ENCODE measurements at regions of chr11 and their contacts with region 1.

Region 1: DNA sequence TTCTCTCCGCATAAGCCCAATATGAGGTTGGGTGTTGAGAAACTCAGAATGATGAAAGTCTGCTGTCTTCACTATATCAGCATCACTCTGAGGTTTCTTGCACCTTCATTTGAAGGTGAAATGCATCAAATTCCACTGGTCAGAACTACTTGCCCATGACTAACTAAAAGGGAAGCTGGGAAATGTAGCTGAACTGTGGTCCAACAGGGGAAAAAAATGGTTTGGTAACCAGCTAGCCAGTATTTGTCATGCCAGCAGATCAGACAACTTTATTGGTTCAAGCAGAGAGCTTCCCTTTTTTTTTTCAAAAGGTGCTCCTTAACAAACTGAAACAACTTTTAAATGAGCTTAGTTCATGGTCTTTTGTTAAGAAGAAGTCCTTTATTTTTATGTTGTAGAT is 14.2 kb upstream of the PIK3C2A start:
- DNase-seq: peak in 2 of 3 donors; percentile 49 to 56
- H3K4me3 ChIP-seq: no peak overlapping the region
- H3K27ac ChIP-seq: peak overlapping the region in 1 of 2 experiments; percentile 8
- H3K4me1 ChIP-seq: peaks cover 0 to 8% (median 3%) of the 10 kb centered on the region in 4 experiments
- H3K27me3 ChIP-seq: no peaks in the 10 kb centered on the region

Region 2: GRCh38 chr11:17098038-17098437 is 123.9 kb before region 1 on chr11:
- CTCF ChIA-PET with region 1: no interaction called
- POLR2A ChIA-PET with region 1: no interaction called
- DNase-seq: no peak
- H3K4me3 ChIP-seq: no peak overlapping the region
- H3K27ac ChIP-seq: no peak overlapping the region
- H3K4me1 ChIP-seq: no peaks in the 10 kb centered on the region
- H3K27me3 ChIP-seq: no peaks in the 10 kb centered on the region

Region 3: GRCh38 chr11:17197431-17197898 is 24.5 kb before region 1 on chr11:
- CTCF ChIA-PET with region 1: no interaction called
- POLR2A ChIA-PET with region 1: no interaction called
- DNase-seq: no peak
- H3K4me3 ChIP-seq: no peak overlapping the region
- H3K27ac ChIP-seq: no peak overlapping the region
- H3K4me1 ChIP-seq: no peaks in the 10 kb centered on the region
- H3K27me3 ChIP-seq: no peaks in the 10 kb centered on the region

Region 4: DNA sequence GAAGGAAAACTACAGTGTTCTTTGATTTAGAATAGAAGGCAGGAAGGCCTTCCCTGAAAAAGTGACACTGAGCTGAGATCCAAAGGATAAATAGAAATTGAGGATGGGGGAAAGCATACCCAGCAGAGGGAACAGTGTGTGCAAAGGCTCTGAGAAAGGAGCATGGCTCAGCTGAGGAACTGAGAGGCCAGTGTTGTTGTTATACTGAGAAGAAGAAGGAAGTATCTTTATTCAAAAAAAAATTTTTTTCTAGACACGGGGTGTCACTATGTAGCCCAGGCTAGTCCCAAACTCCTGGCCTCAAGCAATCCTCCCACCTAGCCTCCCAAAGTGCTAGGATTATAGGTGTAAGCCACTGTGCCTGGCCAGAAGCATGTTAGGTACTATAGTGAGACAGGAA is 10.7 kb before region 1 on chr11:
- CTCF ChIA-PET with region 1: interaction called, 10 read pairs
- POLR2A ChIA-PET with region 1: no interaction called
- DNase-seq: no peak
- H3K4me3 ChIP-seq: no peak overlapping the region
- H3K27ac ChIP-seq: no peak overlapping the region
- H3K4me1 ChIP-seq: peaks cover 16 to 36% (median 28%) of the 10 kb centered on the region in 4 experiments
- H3K27me3 ChIP-seq: no peaks in the 10 kb centered on the region